PC-9 (cell line): ENCODE measurements at regions of chr6 and their contacts with region 1.

Region 1: DNA sequence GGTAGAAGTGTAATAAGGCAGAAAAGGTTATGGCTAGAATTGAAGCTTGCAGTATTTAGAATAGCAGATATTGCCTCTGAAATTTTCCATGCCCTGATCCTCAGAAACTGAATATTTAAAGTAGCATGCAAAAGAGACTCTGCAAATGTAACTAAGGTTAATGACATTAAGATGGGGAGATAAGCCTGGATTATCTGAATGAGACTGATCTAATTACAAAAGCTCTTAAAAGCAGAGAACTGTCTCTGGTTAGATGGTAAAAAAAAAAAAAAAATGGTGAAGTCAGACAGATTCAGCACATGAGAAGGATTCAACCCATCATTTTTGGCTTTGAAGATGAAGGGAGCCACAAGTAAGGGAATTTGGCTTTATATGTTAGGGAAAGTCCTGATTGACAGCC is 503.7 kb upstream of the IRAK1BP1 start:
- DNase-seq: no peak
- H3K4me3 ChIP-seq: no peak overlapping the region
- H3K27ac ChIP-seq: no peak overlapping the region
- H3K4me1 ChIP-seq: no peaks in the 10 kb centered on the region
- H3K27me3 ChIP-seq: no peaks in the 10 kb centered on the region
- CTCF ChIP-seq: no peak

Region 2: GRCh38 chr6:77535172-77535571 is 828.5 kb before region 1 on chr6:
- CTCF ChIA-PET with region 1: no interaction called
- POLR2A ChIA-PET with region 1: no interaction called
- intact Hi-C with region 1: loop called (anchors 5 kb)
- DNase-seq: no peak
- H3K4me3 ChIP-seq: no peak overlapping the region
- H3K27ac ChIP-seq: no peak overlapping the region
- H3K4me1 ChIP-seq: no peaks in the 10 kb centered on the region
- H3K27me3 ChIP-seq: no peaks in the 10 kb centered on the region
- CTCF ChIP-seq: no peak

Region 3: DNA sequence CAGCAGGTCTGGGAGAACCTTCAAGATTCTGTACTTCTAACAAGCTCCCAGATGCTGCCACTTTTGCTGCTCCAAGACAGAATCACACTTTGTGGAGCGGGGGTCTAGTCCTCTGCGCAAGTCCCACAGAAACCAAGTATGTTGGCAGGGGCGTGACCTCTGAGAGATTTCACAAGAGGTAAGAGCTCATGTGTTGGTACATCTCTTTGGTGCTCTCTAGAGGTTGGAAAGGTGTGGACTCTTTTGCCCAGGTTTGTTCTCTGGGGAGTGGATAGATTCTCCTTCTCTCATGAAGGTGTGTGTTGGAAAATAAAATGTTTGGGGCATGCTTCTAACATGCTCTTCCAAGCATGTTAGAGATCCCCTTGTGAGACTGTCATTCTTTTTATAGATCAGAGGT is 162.8 kb after region 1 on chr6:
- CTCF ChIA-PET with region 1: no interaction called
- POLR2A ChIA-PET with region 1: no interaction called
- intact Hi-C with region 1: no loop called
- DNase-seq: no peak
- H3K4me3 ChIP-seq: no peak overlapping the region
- H3K27ac ChIP-seq: no peak overlapping the region
- H3K4me1 ChIP-seq: no peaks in the 10 kb centered on the region
- H3K27me3 ChIP-seq: no peaks in the 10 kb centered on the region
- CTCF ChIP-seq: no peak